Endothelial cell of umbilical vein (primary cell): ENCODE measurements at regions of chr6 and their contacts with region 1.

Region 1: DNA sequence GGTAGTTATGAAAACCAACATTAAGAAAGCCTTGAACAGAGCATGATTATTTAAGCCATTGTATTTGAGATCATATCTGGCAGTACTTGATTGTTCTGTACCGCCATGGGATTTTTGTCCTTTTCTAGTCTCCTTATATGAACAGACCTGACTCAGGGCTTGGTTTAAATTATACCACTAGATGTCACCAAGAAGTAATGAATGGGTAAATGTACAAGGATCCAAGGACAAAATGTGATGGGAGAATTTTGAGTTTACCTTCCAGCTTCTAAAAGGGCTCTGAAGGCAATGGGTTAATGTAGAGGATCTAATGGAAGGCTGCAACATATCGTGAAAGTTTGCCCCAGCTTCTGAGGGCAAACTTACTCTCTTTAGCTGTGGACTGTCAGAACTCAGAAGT is 12.0 kb downstream of the RNF8 start:
- DNase-seq: peak; percentile 71
- H3K4me3 ChIP-seq: no peak overlapping the region
- H3K27ac ChIP-seq: no peak overlapping the region
- H3K4me1 ChIP-seq: peaks cover 22% of the 10 kb centered on the region
- H3K27me3 ChIP-seq: no peaks in the 10 kb centered on the region
- CTCF ChIP-seq: no peak
- POLR2A ChIP-seq: no peak

Region 2: DNA sequence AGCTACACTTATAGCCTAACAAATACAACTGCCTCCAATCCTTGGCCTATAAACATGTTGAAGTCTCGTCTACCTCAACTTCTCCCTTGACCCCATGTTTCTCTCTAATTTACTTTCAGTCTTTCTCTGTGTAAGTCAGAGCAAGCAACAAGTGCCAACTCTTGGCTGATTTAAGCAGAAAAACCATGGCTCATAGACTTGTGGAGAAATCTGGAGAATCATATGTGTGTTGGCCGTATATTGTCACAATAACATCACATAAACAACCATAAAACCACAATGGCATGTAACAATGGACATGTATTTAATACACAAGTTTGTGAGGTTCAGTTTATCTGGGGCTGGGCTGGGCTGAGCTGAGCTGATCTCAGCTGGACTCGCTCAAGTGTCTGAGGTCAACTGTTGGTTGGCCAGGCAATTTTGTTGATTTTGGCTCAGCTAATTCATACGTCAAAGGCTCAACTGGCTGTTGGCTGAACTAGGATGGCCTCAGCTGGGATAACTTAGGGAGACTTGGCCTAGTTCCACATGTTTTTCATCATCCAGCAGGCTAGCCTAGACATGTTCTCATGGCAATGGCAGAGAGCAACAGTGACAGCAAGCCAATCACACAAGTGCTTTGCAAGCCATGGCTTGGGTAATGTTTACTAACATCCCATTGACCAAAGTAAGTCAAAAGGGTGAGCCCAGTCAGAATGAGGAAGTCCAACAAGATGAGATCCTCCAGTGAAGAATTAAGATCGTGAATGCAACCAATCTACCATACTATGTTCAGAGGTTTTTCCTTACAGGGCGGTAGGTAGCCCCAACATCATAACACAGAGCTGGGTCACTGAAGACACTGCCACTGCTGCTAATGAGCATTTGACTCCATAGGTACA is 121.1 kb before region 1 on chr6:
- CTCF ChIA-PET with region 1: no interaction called
- POLR2A ChIA-PET with region 1: no interaction called
- dilution Hi-C with region 1: no loop called
- intact Hi-C with region 1: no loop called
- DNase-seq: peak; percentile 100
- H3K4me3 ChIP-seq: no peak overlapping the region
- H3K27ac ChIP-seq: peak overlapping the region; percentile 99
- H3K4me1 ChIP-seq: peaks cover 53% of the 10 kb centered on the region
- H3K27me3 ChIP-seq: no peaks in the 10 kb centered on the region
- CTCF ChIP-seq: no peak
- POLR2A ChIP-seq: peak; percentile 51

Region 3: GRCh38 chr6:37381579-37381978 is 15.8 kb after region 1 on chr6:
- CTCF ChIA-PET with region 1: interaction called, 12 read pairs
- POLR2A ChIA-PET with region 1: no interaction called
- dilution Hi-C with region 1: no loop called
- intact Hi-C with region 1: no loop called
- DNase-seq: peak; percentile 60
- H3K4me3 ChIP-seq: no peak overlapping the region
- H3K27ac ChIP-seq: no peak overlapping the region
- H3K4me1 ChIP-seq: no peaks in the 10 kb centered on the region
- H3K27me3 ChIP-seq: no peaks in the 10 kb centered on the region
- CTCF ChIP-seq: peak; percentile 45 to 52
- POLR2A ChIP-seq: no peak

Region 4: DNA sequence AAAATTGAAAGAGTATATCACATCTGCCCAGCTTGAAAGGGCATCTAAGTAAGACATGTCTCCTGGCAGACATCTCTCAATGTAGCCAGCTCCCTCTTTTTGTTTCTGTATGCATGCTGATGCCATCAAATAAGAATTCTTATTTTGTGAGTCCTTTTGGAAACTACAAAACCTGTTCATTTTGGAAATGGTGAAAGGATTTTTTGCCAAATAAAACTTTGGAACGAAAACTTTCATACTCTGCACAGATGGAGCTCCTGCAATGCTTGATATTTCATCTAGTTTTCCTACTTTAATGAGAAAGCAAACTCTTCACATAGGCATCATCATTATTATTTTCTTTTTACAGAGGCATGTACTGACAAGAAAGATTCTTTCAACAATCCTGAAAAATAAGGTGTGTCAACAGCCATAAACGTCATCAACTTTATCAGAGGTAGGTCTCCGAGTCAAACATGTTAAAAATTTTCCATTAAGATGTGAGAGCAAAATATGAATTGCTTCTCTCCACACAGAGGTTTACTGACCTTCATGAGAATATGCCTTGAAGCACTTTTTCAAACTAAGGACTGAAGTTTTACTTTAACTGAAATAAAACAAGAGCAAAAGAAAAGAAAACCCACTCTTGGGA is 41.1 kb after region 1 on chr6:
- CTCF ChIA-PET with region 1: no interaction called
- POLR2A ChIA-PET with region 1: no interaction called
- dilution Hi-C with region 1: no loop called
- intact Hi-C with region 1: no loop called
- DNase-seq: no peak
- H3K4me3 ChIP-seq: no peak overlapping the region
- H3K27ac ChIP-seq: no peak overlapping the region
- H3K4me1 ChIP-seq: no peaks in the 10 kb centered on the region
- H3K27me3 ChIP-seq: peaks cover 4 to 23% of the 10 kb centered on the region in 2 experiments
- CTCF ChIP-seq: no peak
- POLR2A ChIP-seq: no peak

Region 5: DNA sequence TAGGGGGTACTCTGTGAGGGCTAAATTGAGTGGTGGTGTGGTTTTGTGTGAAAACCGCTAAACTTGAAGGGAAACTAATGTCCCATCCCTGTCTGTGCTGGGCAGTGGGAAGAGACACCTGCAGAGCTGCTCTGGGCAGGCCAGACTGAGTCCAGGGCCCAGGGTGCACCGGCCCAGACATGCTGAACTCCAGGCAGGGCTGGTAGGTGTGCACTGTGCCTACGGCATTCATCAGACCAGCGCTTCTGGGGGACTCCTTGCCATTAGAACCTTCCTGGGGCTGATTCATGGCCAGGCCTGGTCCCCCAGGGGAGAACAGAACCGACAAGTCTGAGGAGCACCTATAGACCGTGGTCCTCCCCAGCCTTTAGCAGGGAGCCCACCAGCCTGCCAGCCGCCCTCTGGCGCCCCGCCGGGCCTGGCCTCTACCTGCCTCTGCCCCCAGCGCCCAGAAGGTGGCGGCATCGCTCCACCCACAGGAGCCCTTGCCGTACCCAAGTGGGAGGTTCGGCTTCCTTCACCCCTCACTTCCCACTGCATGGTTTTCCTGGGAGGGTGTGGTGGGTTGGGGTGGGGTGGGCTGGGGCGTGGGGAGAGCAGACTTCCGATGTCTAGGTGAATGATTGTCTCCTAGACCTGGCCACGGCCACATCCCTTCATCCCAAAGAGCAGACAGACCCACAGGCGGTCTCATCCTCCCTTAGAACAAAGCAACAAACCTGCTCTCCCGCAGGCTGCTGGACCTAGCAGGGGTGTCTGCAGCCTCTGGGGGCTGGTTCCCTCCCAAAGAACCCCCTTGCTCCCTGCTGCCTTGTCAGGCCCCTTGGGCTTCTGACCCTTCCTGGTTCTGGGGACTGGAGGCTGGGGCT is 118.4 kb after region 1 on chr6:
- CTCF ChIA-PET with region 1: interaction called, 3 read pairs
- POLR2A ChIA-PET with region 1: no interaction called
- dilution Hi-C with region 1: no loop called
- intact Hi-C with region 1: loop called (anchors 5 kb)
- DNase-seq: peak; percentile 33
- H3K4me3 ChIP-seq: no peak overlapping the region
- H3K27ac ChIP-seq: no peak overlapping the region
- H3K4me1 ChIP-seq: no peaks in the 10 kb centered on the region
- H3K27me3 ChIP-seq: no peaks in the 10 kb centered on the region
- CTCF ChIP-seq: peak; percentile 65 to 91
- POLR2A ChIP-seq: no peak